HepG2 (cell line): ENCODE measurements at regions of chr20 and their contacts with region 1.

Region 1: GRCh38 chr20:32285621-32286371 is 8.3 kb downstream of the KIF3B start:
- DNase-seq: no peak
- ATAC-seq: no peak
- H3K4me3 ChIP-seq: no peak overlapping the region
- H3K27ac ChIP-seq: peak overlapping the region; percentile 20
- H3K4me1 ChIP-seq: peaks cover 64% of the 10 kb centered on the region
- H3K27me3 ChIP-seq: no peaks in the 10 kb centered on the region
- CTCF ChIP-seq: no peak
- EP300 ChIP-seq: no peak
- POLR2A ChIP-seq: no peak
- RAD21 ChIP-seq: no peak

Region 2: GRCh38 chr20:32240220-32240619 is 45.6 kb before region 1 on chr20:
- CTCF ChIA-PET with region 1: no interaction called
- POLR2A ChIA-PET with region 1: interaction called, 19 read pairs
- in situ Hi-C with region 1: no loop called
- intact Hi-C with region 1: loop called (anchors 5 kb)
- DNase-seq: no peak
- ATAC-seq: no peak
- H3K4me3 ChIP-seq: no peak overlapping the region
- H3K27ac ChIP-seq: no peak overlapping the region
- H3K4me1 ChIP-seq: peaks cover 52% of the 10 kb centered on the region
- H3K27me3 ChIP-seq: no peaks in the 10 kb centered on the region
- CTCF ChIP-seq: peak; percentile 48
- EP300 ChIP-seq: no peak
- POLR2A ChIP-seq: no peak
- RAD21 ChIP-seq: peak; percentile 17; the same call in 1 of the 2 replicates

Region 3: DNA sequence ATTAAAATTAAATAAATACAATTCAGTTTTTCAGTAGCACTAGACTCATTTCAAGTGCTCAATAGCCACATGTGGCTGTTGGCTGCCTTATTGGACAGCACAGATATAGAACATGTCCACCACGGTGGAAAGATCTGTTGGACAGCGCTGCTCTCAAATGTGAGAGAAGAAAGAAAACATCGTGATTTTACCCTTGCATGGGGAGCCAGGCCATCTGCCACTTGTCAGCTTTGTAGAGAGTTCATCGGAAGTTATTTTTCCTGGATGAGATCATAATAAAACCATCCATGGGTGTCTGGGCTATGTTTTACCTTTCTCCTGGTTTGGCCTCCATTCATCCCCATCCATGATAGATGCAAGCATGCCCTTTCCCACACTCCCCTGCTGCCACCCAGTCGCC is 14.2 kb before region 1 on chr20:
- CTCF ChIA-PET with region 1: no interaction called
- POLR2A ChIA-PET with region 1: interaction called, 52 read pairs
- in situ Hi-C with region 1: no loop called
- intact Hi-C with region 1: no loop called
- DNase-seq: no peak
- ATAC-seq: no peak
- H3K4me3 ChIP-seq: no peak overlapping the region
- H3K27ac ChIP-seq: no peak overlapping the region
- H3K4me1 ChIP-seq: peaks cover 48% of the 10 kb centered on the region
- H3K27me3 ChIP-seq: no peaks in the 10 kb centered on the region
- CTCF ChIP-seq: no peak
- EP300 ChIP-seq: no peak
- POLR2A ChIP-seq: no peak
- RAD21 ChIP-seq: no peak

Region 4: GRCh38 chr20:32302507-32302872 is 16.7 kb after region 1 on chr20:
- CTCF ChIA-PET with region 1: no interaction called
- POLR2A ChIA-PET with region 1: interaction called, 39 read pairs
- in situ Hi-C with region 1: no loop called
- intact Hi-C with region 1: no loop called
- DNase-seq: peak; percentile 27
- ATAC-seq: peak; percentile 46
- H3K4me3 ChIP-seq: no peak overlapping the region
- H3K27ac ChIP-seq: no peak overlapping the region
- H3K4me1 ChIP-seq: peaks cover 41% of the 10 kb centered on the region
- H3K27me3 ChIP-seq: no peaks in the 10 kb centered on the region
- CTCF ChIP-seq: no peak
- EP300 ChIP-seq: no peak
- POLR2A ChIP-seq: no peak
- RAD21 ChIP-seq: no peak

Region 5: GRCh38 chr20:32325706-32326503 is 40.1 kb after region 1 on chr20:
- CTCF ChIA-PET with region 1: no interaction called
- POLR2A ChIA-PET with region 1: interaction called, 39 read pairs
- in situ Hi-C with region 1: no loop called
- intact Hi-C with region 1: loop called (anchors 1 kb)
- DNase-seq: peak; percentile 99
- ATAC-seq: peak; percentile 84
- H3K4me3 ChIP-seq: peak overlapping the region in 1 of 3 experiments; percentile 8; a peak in 1 of 6 replicates
- H3K27ac ChIP-seq: peak overlapping the region; percentile 86
- H3K4me1 ChIP-seq: peaks cover 72% of the 10 kb centered on the region
- H3K27me3 ChIP-seq: no peaks in the 10 kb centered on the region
- CTCF ChIP-seq: no peak
- EP300 ChIP-seq: peak; percentile 82 to 89
- POLR2A ChIP-seq: no peak
- RAD21 ChIP-seq: no peak; the same call in none of the 2 replicates

Region 6: GRCh38 chr20:34024723-34025351 is 1739.0 kb after region 1 on chr20:
- CTCF ChIA-PET with region 1: no interaction called
- POLR2A ChIA-PET with region 1: no interaction called
- in situ Hi-C with region 1: no loop called
- intact Hi-C with region 1: no loop called
- DNase-seq: peak; percentile 50
- ATAC-seq: peak; percentile 36
- H3K4me3 ChIP-seq: no peak overlapping the region
- H3K27ac ChIP-seq: no peak overlapping the region
- H3K4me1 ChIP-seq: peaks cover 40% of the 10 kb centered on the region
- H3K27me3 ChIP-seq: no peaks in the 10 kb centered on the region
- CTCF ChIP-seq: no peak
- EP300 ChIP-seq: no peak
- POLR2A ChIP-seq: no peak
- RAD21 ChIP-seq: no peak